ENCODE measurements at regions of chr20 and their contacts with region 1.

Region 1: GRCh38 chr20:31605031-31605901 is at the start of gene ID1:
- DNase-seq: peak; percentile 92
- ATAC-seq: peak; percentile 94
- H3K4me3 Mint-ChIP-seq: peak within 1 kb of the TSS; percentile 81
- H3K27ac Mint-ChIP-seq: peak within 1 kb of the TSS; percentile 72
- H3K4me1 Mint-ChIP-seq: peaks cover 33% of the 10 kb centered on the region
- H3K27me3 Mint-ChIP-seq: peaks cover 50% of the 10 kb centered on the region
- total RNA-seq, gene ID1: 0.42 to 0.50 TPM

Region 2: GRCh38 chr20:31572701-31573554 is 32.3 kb before region 1 on chr20:
- CTCF ChIA-PET with region 1: interaction called, 901 read pairs
- POLR2A ChIA-PET with region 1: interaction called, 26 read pairs
- DNase-seq: peak; percentile 91
- ATAC-seq: peak; percentile 92
- H3K4me3 Mint-ChIP-seq: peak overlapping the region; percentile 85
- H3K27ac Mint-ChIP-seq: peak overlapping the region; percentile 88
- H3K4me1 Mint-ChIP-seq: peaks cover 27% of the 10 kb centered on the region
- H3K27me3 Mint-ChIP-seq: peaks cover under 1% of the 10 kb centered on the region